ENCODE measurements at regions of chr2 and their contacts with region 1.

Region 1: GRCh38 chr2:61426267-61426897 is 44.5 kb downstream of the USP34 start:
- DNase-seq: no peak
- ATAC-seq: peak; percentile 93
- H3K4me3 ChIP-seq: no peak overlapping the region
- H3K27ac ChIP-seq: peak overlapping the region; percentile 39
- H3K4me1 ChIP-seq: peaks cover 32% of the 10 kb centered on the region
- H3K27me3 ChIP-seq: no peaks in the 10 kb centered on the region
- CTCF ChIP-seq: peak; percentile 75 to 91 (median 88)
- EP300 ChIP-seq: no peak
- POLR2A ChIP-seq: no peak
- RAD21 ChIP-seq: peak; percentile 81

Region 2: DNA sequence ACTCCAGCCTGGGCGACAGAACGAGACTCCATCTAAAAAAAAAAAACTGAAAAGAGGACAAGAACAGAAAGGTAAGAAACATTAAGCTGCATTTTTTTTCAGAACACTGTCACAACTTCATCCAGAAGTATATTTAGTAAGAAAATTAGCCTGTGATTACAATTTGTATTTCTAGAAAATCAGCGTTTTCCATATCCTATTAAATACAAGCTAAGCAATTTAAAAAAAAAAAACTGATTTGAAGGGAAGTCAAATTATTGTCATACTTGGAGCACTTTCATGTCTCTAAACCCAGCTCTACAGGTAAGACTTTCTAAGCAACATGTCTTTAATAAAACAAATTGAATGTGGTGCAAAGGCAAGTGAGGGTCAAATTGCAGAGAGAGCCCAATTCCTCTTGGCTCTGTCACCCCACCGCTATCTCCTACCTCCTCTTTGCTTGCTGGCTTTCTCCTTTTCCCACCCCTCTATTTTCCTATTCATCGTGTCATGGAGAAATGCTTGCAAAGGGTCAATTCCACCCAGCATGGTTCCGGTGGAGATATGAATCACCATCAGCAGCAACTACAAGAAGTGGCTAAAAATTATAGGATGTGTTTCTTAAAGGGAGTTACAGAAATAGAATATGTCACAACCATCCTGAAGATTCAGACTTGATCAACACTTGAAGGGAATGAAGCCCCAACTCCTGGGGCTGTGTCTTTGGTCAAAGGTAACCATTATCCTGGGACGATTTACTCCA is 804.5 kb before region 1 on chr2:
- CTCF ChIA-PET with region 1: no interaction called
- POLR2A ChIA-PET with region 1: no interaction called
- RAD21 ChIA-PET with region 1: no interaction called
- SMC1A ChIA-PET with region 1: no interaction called
- in situ Hi-C with region 1: no loop called
- intact Hi-C with region 1: no loop called
- DNase-seq: no peak
- ATAC-seq: no peak
- H3K4me3 ChIP-seq: no peak overlapping the region
- H3K27ac ChIP-seq: no peak overlapping the region
- H3K4me1 ChIP-seq: no peaks in the 10 kb centered on the region
- H3K27me3 ChIP-seq: no peaks in the 10 kb centered on the region; a peak in 2 of 4 replicates
- CTCF ChIP-seq: no peak
- EP300 ChIP-seq: no peak
- POLR2A ChIP-seq: no peak
- RAD21 ChIP-seq: no peak

Region 3: GRCh38 chr2:61353909-61354308 is 72.5 kb before region 1 on chr2:
- CTCF ChIA-PET with region 1: no interaction called
- POLR2A ChIA-PET with region 1: no interaction called
- RAD21 ChIA-PET with region 1: no interaction called
- SMC1A ChIA-PET with region 1: no interaction called
- in situ Hi-C with region 1: no loop called
- intact Hi-C with region 1: no loop called
- DNase-seq: no peak
- ATAC-seq: no peak
- H3K4me3 ChIP-seq: no peak overlapping the region
- H3K27ac ChIP-seq: no peak overlapping the region
- H3K4me1 ChIP-seq: peaks cover 3% of the 10 kb centered on the region; the same call in 1 of the 2 replicates
- H3K27me3 ChIP-seq: no peaks in the 10 kb centered on the region
- CTCF ChIP-seq: no peak
- EP300 ChIP-seq: no peak
- POLR2A ChIP-seq: no peak
- RAD21 ChIP-seq: no peak

Region 4: GRCh38 chr2:61443342-61444041 is 17.1 kb after region 1 on chr2:
- CTCF ChIA-PET with region 1: interaction called, 22 read pairs
- POLR2A ChIA-PET with region 1: interaction called, 8 read pairs
- RAD21 ChIA-PET with region 1: interaction called, 13 read pairs
- SMC1A ChIA-PET with region 1: interaction called, 25 read pairs
- in situ Hi-C with region 1: no loop called
- intact Hi-C with region 1: no loop called
- DNase-seq: peak; percentile 97
- ATAC-seq: peak; percentile 93
- H3K4me3 ChIP-seq: no peak overlapping the region
- H3K27ac ChIP-seq: peak overlapping the region; percentile 76
- H3K4me1 ChIP-seq: peaks cover 46% of the 10 kb centered on the region
- H3K27me3 ChIP-seq: no peaks in the 10 kb centered on the region
- CTCF ChIP-seq: no peak
- EP300 ChIP-seq: peak; percentile 90 to 98; a peak in 3 of 4 replicates
- POLR2A ChIP-seq: no peak
- RAD21 ChIP-seq: no peak

Region 5: DNA sequence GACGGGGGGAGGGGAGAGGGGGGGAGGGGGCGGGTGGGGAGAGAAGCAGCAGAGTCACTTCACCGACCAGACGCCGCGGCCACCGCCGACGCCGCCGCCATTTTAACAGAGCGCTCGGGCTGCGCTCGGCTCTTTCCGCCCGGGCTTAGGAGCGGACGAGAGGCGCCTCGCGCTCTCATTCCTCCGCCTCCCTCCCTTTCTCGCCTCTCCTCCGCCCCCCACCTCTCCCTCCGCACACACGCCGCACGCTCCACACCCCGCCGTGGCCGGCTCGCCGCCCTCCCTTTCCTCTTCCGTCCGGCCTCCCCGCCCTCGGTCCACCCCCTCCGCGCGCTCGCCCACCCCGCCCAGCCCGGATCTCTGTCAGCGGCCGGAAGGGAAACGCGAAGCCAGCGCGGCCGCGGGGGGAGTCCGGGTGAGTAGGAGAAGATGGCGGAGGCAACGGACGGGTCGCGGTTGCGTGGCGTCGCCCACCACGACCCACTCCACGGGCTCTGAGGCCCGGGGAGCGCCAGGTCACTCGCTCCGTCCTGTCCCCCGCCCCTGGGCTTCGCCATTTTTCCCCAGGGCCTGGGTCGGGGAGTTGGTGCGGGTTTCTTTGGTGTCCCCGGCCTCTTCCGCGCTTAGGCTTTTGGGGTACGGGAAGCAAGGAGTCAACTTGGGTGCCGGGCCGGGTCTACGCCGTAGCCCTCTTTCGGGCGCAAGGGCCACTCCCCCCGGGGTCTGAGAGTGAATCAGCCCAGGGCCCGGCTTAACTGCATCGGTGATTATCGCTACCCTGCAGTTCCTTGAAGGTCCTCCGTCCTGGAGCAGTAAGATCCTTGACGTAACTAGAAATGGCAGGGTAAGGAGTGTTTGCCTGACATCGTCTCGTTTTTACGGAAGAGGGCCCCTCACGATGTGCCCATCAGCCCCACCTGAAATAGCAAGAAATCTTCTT is 44.9 kb after region 1 on chr2 and contains the start of gene USP34:
- CTCF ChIA-PET with region 1: interaction called, 44 read pairs
- POLR2A ChIA-PET with region 1: interaction called, 9 read pairs
- RAD21 ChIA-PET with region 1: interaction called, 30 read pairs
- SMC1A ChIA-PET with region 1: interaction called, 74 read pairs
- in situ Hi-C with region 1: no loop called
- intact Hi-C with region 1: no loop called
- DNase-seq: peak; percentile 87
- ATAC-seq: peak; percentile 93
- H3K4me3 ChIP-seq: peak within 1 kb of the TSS; percentile 98
- H3K27ac ChIP-seq: peak within 1 kb of the TSS; percentile 97
- H3K4me1 ChIP-seq: no peaks in the 10 kb centered on the region; the same call in 1 of the 2 replicates
- H3K27me3 ChIP-seq: no peaks in the 10 kb centered on the region
- CTCF ChIP-seq: no peak
- EP300 ChIP-seq: no peak
- POLR2A ChIP-seq: peak; percentile 96
- RAD21 ChIP-seq: no peak
- polyA plus RNA-seq, gene USP34: 26.2 to 30.6 TPM

Region 6: GRCh38 chr2:61485281-61485680 is 58.9 kb after region 1 on chr2:
- CTCF ChIA-PET with region 1: interaction called, 18 read pairs
- POLR2A ChIA-PET with region 1: no interaction called
- RAD21 ChIA-PET with region 1: interaction called, 4 read pairs
- SMC1A ChIA-PET with region 1: interaction called, 10 read pairs
- in situ Hi-C with region 1: no loop called
- intact Hi-C with region 1: no loop called
- DNase-seq: no peak
- ATAC-seq: no peak
- H3K4me3 ChIP-seq: no peak overlapping the region
- H3K27ac ChIP-seq: no peak overlapping the region
- H3K4me1 ChIP-seq: no peaks in the 10 kb centered on the region
- H3K27me3 ChIP-seq: no peaks in the 10 kb centered on the region
- CTCF ChIP-seq: no peak
- EP300 ChIP-seq: no peak
- POLR2A ChIP-seq: no peak
- RAD21 ChIP-seq: no peak

Region 7: DNA sequence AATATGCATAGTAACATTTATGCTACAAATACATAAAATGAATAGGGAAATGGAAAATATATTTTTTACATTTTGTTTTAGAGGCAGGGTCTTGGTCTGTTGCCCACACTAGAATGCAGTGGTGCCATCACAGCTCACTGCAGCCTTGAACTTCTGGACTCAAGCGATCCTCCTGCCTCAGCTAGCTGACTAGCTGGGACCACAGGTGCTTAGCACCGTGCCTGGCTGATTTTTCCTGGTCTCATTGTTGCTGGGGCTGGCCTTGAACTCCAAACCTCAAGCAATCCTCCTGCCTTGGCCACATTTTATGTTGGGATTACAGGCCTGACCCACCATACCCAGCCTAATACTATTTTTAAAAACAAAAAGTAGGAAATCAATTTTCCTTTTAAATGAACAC is 78.6 kb after region 1 on chr2:
- CTCF ChIA-PET with region 1: interaction called, 8 read pairs
- POLR2A ChIA-PET with region 1: no interaction called
- RAD21 ChIA-PET with region 1: interaction called, 5 read pairs
- SMC1A ChIA-PET with region 1: interaction called, 11 read pairs
- in situ Hi-C with region 1: no loop called
- intact Hi-C with region 1: no loop called
- DNase-seq: no peak
- ATAC-seq: no peak
- H3K4me3 ChIP-seq: no peak overlapping the region
- H3K27ac ChIP-seq: no peak overlapping the region
- H3K4me1 ChIP-seq: no peaks in the 10 kb centered on the region
- H3K27me3 ChIP-seq: no peaks in the 10 kb centered on the region
- CTCF ChIP-seq: no peak
- EP300 ChIP-seq: no peak
- POLR2A ChIP-seq: no peak; the same call in 1 of the 2 replicates
- RAD21 ChIP-seq: no peak

Region 8: DNA sequence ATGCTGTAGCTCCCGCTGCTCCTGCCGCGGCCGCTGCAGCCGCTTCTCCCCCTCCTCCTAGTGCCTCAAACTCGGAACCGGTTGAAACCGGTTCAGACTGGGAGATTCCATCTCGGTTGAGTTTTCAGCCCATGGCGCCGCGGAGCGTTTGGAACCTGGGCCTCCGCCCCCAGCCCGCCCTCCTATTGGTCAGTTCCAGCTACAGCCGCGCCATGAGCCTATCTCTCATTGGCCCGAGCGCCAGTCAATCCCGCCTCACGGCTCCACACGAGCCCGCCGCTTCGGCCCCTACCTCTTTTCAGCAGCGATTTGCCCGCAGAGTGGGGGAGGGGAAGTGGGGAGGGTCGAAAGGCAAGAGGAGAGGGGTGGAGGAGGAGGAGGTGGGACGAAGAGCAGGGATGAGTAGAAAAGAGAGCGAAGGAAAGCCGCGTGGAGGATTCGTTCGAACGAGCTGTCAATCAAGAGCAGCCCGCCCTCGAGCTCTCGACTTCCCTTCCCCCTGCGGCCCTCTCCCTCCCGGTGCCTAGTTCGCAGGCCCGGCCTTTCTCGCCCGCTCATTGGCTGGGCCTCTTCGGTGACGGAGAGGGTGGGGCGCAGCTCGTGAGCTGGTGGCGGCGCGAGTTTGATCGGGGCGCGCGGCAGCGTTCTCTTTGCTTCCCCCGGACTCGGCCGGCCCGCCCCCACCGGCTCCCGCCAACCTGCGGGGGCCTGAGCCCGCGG is 112.0 kb after region 1 on chr2 and contains the start of gene XPO1:
- CTCF ChIA-PET with region 1: interaction called, 14 read pairs
- POLR2A ChIA-PET with region 1: interaction called, 11 read pairs
- RAD21 ChIA-PET with region 1: interaction called, 15 read pairs
- SMC1A ChIA-PET with region 1: interaction called, 10 read pairs
- in situ Hi-C with region 1: no loop called
- intact Hi-C with region 1: no loop called
- DNase-seq: peak; percentile 95
- ATAC-seq: peak; percentile 90
- H3K4me3 ChIP-seq: peak within 1 kb of the TSS; percentile 84
- H3K27ac ChIP-seq: peak within 1 kb of the TSS; percentile 99
- H3K4me1 ChIP-seq: peaks cover 5% of the 10 kb centered on the region
- H3K27me3 ChIP-seq: no peaks in the 10 kb centered on the region
- CTCF ChIP-seq: 0 out of 6 replicates have a peak, but pooled peaks of 1 of the 3 experiments have one; percentile 2
- EP300 ChIP-seq: peak; percentile 20 to 48; a peak in 2 of 4 replicates
- POLR2A ChIP-seq: peak; percentile 96
- RAD21 ChIP-seq: no peak
- polyA plus RNA-seq, gene XPO1: 57.3 to 62.8 TPM